ENCODE measurements at regions of chr13 and their contacts with region 1.

Region 1: DNA sequence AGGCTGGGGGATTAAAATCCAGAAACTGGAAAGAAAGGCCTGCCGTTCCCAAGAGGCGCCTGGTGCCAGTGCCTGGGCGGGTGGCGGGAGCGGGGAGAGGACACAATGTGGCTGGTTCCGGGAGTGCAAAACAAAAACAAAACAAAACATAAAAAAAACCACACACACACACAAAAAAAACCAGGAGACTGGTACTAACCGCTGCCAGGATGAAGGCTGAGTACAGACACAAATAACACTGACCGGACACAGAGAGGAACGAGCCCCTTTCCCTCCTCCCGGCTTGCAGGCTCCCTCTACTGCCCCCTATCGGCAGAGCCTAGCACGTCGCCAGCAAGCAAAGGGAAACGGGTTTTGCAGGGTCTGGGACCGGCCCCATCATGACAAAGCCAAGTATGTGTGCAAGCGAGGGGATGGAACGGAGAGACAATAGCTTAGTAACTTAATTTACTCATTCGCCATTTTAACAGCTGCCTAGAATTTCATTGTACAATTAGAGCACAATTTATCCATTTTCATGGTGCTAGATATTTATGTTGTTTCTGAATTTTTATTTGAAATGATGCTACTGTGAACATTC is 17.9 kb upstream of the ZDHHC20 start:
- DNase-seq: peak; percentile 50
- ATAC-seq: peak; percentile 97
- H3K4me3 ChIP-seq: peak overlapping the region; percentile 71
- H3K27ac ChIP-seq: peak overlapping the region; percentile 48; the same call in 1 of the 2 replicates
- H3K4me1 ChIP-seq: no peaks in the 10 kb centered on the region
- H3K27me3 ChIP-seq: no peaks in the 10 kb centered on the region
- CTCF ChIP-seq: peak; percentile 88 to 98 (median 98)
- EP300 ChIP-seq: no peak
- POLR2A ChIP-seq: peak; percentile 42; the same call in 1 of the 2 replicates
- RAD21 ChIP-seq: peak; percentile 87

Region 2: DNA sequence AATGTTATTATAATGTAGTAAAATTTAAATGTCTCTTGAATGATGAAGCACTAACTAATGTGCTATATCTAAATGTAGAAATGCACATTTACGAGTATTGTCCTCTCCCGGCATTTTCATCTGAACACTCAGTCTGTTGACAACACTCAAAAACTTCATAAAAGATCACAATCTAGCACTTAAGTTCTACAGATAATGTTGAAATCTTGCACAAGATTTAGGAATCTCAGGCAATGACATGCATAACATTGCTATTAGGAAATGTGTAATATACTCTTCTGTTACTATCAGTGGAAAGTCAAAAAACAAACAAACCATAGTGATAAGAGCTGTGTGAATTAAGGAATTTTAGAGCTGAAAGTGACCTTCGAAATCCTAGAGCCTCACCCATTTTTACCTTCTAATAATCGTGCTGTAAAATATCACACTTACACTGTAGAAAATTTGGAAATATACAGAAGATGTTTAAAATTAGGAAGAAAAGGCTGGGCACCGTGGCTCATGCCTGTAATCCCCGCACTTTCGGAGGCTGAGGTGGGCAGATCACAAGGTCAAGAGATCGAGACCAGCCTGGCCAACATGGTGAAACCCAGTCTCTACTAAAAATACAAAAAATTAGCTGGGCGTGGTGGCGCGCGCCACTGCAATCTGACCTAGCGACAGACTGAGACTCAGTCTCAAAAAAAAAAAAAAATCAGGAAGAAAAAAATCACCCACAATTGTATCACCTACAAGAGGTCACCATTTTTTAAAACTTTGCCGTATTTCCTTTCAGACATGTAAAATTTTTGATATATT is 536.7 kb before region 1 on chr13:
- CTCF ChIA-PET with region 1: interaction called, 51 read pairs
- POLR2A ChIA-PET with region 1: no interaction called
- RAD21 ChIA-PET with region 1: interaction called, 4 read pairs
- SMC1A ChIA-PET with region 1: no interaction called
- in situ Hi-C with region 1: loop called (anchors 5 kb)
- intact Hi-C with region 1: loop called (anchors 1 kb)
- DNase-seq: no peak
- ATAC-seq: no peak
- H3K4me3 ChIP-seq: no peak overlapping the region
- H3K27ac ChIP-seq: no peak overlapping the region
- H3K4me1 ChIP-seq: no peaks in the 10 kb centered on the region
- H3K27me3 ChIP-seq: no peaks in the 10 kb centered on the region
- CTCF ChIP-seq: no peak
- EP300 ChIP-seq: no peak
- POLR2A ChIP-seq: no peak
- RAD21 ChIP-seq: no peak

Region 3: DNA sequence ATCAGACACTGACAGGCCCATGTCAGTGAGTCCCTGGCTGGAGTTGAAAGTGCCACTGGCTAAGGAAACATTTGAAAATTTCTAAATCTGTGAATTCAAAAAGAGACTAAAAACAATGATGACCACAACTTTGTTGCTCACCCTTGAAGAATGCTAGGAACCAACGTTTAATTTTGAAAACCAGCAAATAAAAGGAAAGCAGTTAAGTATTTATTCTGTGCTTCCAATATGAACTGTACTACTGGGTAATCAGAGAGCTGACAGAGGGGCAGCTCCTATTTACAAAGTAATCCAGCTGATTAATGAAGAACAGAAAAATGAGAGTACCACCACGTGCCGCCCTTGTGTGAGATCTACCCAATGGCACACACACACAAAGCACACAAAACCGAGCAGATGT is 370.9 kb before region 1 on chr13:
- CTCF ChIA-PET with region 1: interaction called, 14 read pairs
- POLR2A ChIA-PET with region 1: no interaction called
- RAD21 ChIA-PET with region 1: no interaction called
- SMC1A ChIA-PET with region 1: interaction called, 3 read pairs
- in situ Hi-C with region 1: loop called (anchors 5 kb)
- intact Hi-C with region 1: loop called (anchors 1 kb)
- DNase-seq: no peak
- ATAC-seq: no peak
- H3K4me3 ChIP-seq: no peak overlapping the region
- H3K27ac ChIP-seq: no peak overlapping the region
- H3K4me1 ChIP-seq: no peaks in the 10 kb centered on the region
- H3K27me3 ChIP-seq: no peaks in the 10 kb centered on the region
- CTCF ChIP-seq: no peak
- EP300 ChIP-seq: no peak
- POLR2A ChIP-seq: no peak
- RAD21 ChIP-seq: no peak

Region 4: DNA sequence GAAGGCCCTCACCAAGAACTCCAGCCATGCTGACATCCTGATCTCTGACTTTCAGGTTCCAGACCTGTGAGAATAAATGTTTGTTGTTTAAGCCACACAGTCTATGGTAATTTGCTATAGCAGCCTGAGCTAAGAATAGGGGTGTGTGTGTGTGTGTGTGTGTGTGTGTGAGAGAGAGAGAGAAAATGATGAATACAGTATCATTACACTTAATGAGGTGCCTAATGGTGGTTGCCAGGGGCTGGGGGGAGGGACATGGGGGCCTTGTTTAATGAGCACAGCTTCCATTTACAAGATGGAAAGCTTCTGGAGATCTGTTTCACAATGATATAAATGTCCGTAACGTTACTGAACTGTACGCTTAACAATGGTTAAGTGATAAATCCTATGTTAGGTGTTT is 361.8 kb before region 1 on chr13:
- CTCF ChIA-PET with region 1: interaction called, 14 read pairs
- POLR2A ChIA-PET with region 1: no interaction called
- RAD21 ChIA-PET with region 1: no interaction called
- SMC1A ChIA-PET with region 1: no interaction called
- in situ Hi-C with region 1: loop called (anchors 5 kb)
- intact Hi-C with region 1: loop called (anchors 1 kb)
- DNase-seq: no peak
- ATAC-seq: no peak
- H3K4me3 ChIP-seq: no peak overlapping the region
- H3K27ac ChIP-seq: no peak overlapping the region
- H3K4me1 ChIP-seq: no peaks in the 10 kb centered on the region
- H3K27me3 ChIP-seq: no peaks in the 10 kb centered on the region
- CTCF ChIP-seq: no peak
- EP300 ChIP-seq: no peak
- POLR2A ChIP-seq: no peak
- RAD21 ChIP-seq: no peak

Region 5: DNA sequence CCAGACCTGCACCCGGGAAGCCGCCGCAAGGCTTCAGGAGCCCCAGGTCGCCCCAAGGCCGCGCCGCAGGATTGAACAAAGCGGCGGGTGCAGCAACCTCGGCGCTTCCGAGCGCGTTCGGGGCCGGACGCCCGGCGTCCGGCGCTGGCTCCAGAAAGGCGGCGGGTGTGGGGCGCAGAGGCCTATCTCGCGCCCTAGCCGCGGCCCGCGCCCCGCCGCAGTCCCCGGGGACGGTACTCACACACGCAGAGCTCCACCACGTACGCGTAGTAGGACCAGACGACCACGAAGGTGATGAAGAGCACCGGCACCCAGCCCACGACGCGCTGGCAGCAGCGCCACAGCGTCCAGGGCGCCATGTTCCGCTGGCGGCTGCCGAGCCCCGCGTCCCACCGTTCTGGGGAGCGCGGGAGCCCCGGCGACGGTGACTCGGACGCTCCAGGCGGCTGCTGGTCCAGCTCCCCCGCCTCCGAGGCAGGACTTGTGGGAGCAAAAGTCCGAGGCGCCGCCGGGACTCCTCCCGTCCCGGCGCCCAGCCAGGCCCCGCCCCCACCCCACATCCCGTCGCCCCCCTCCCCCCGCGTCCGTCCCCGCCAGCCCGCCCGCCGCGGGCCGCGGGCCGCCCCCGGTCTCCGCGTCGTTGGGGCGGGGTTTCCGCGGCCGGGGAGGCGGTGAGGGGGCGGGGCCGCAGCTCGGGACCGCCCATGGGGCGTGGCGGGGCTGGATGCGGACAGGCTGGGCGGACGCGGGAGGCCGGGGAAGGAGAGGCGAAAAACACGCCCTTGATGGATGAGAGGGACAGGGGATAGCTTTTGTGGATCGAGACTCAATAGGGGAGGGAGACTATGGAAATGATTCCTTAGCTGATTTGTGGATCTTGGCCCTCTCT is 17.9 kb before region 1 on chr13 and contains the start of gene ZDHHC20:
- CTCF ChIA-PET with region 1: interaction called, 17 read pairs
- POLR2A ChIA-PET with region 1: no interaction called
- RAD21 ChIA-PET with region 1: interaction called, 3 read pairs
- SMC1A ChIA-PET with region 1: interaction called, 7 read pairs
- in situ Hi-C with region 1: no loop called
- intact Hi-C with region 1: no loop called
- DNase-seq: no peak
- ATAC-seq: peak; percentile 87
- H3K4me3 ChIP-seq: peak within 1 kb of the TSS; percentile 74
- H3K27ac ChIP-seq: peak within 1 kb of the TSS; percentile 78
- H3K4me1 ChIP-seq: peaks cover 4% of the 10 kb centered on the region; the same call in 1 of the 2 replicates
- H3K27me3 ChIP-seq: no peaks in the 10 kb centered on the region
- CTCF ChIP-seq: no peak
- EP300 ChIP-seq: no peak
- POLR2A ChIP-seq: peak; percentile 85
- RAD21 ChIP-seq: no peak
- polyA plus RNA-seq, gene ZDHHC20: 8.6 to 12.3 TPM

Region 6: GRCh38 chr13:21465710-21466160 is 11.2 kb before region 1 on chr13:
- CTCF ChIA-PET with region 1: interaction called, 17 read pairs
- POLR2A ChIA-PET with region 1: no interaction called
- RAD21 ChIA-PET with region 1: no interaction called
- SMC1A ChIA-PET with region 1: interaction called, 6 read pairs
- in situ Hi-C with region 1: no loop called
- intact Hi-C with region 1: no loop called
- DNase-seq: no peak
- ATAC-seq: no peak
- H3K4me3 ChIP-seq: no peak overlapping the region
- H3K27ac ChIP-seq: no peak overlapping the region
- H3K4me1 ChIP-seq: no peaks in the 10 kb centered on the region
- H3K27me3 ChIP-seq: no peaks in the 10 kb centered on the region
- CTCF ChIP-seq: no peak
- EP300 ChIP-seq: no peak
- POLR2A ChIP-seq: no peak
- RAD21 ChIP-seq: no peak